ENCODE measurements at regions of chr2 and their contacts with region 1.

Region 1: DNA sequence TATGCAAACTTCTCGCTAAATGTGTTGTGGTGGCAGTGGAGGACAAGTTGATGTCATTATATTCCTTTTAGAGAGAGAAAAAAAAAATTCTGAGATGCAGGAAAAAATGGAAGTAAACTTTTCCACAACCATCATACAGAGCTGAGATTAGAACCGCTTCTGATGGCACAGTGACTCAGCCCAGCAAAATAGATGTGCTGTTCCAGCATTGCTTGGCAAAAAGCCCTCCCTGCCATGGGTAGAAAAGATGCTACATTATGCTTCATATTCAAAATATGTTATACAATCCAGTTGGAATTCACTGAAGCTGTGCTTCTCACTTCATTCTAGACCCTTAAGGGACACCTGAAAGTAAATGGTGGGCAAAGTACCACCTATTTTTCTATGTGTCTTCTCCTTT is 1047.6 kb upstream of the FANCL start:
- DNase-seq: no peak
- H3K4me3 ChIP-seq: no peak overlapping the region
- H3K27ac ChIP-seq: no peak overlapping the region
- H3K4me1 ChIP-seq: no peaks in the 10 kb centered on the region
- H3K27me3 ChIP-seq: peaks cover 0 to 1% (median 0%) of the 10 kb centered on the region in 4 experiments; a peak in 1 of 7 replicates
- CTCF ChIP-seq: no peak
- EP300 ChIP-seq: no peak
- POLR2A ChIP-seq: no peak
- RAD21 ChIP-seq: no peak

Region 2: DNA sequence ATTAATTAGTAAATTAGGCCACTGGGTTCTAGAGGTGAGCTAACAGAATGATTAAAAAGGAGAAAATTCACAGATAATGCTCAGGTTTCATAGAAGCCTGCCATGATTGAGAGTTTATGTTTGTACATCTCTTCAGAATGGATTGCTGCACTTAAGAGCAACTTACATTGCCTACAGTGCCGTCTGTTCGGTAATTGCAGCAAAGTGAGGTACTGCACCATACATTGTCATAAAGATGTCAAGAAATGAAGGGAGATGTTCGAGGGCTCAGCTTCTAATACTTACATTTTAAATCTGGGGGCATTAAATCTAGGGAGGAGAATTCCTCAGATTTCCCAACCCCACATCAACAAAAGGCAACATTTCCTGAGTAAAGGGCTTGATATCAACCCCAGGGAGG is 71.4 kb before region 1 on chr2:
- CTCF ChIA-PET with region 1: no interaction called
- POLR2A ChIA-PET with region 1: no interaction called
- DNase-seq: no peak
- H3K4me3 ChIP-seq: no peak overlapping the region
- H3K27ac ChIP-seq: no peak overlapping the region
- H3K4me1 ChIP-seq: no peaks in the 10 kb centered on the region
- H3K27me3 ChIP-seq: no peaks in the 10 kb centered on the region
- CTCF ChIP-seq: no peak
- EP300 ChIP-seq: no peak
- POLR2A ChIP-seq: no peak
- RAD21 ChIP-seq: no peak

Region 3: DNA sequence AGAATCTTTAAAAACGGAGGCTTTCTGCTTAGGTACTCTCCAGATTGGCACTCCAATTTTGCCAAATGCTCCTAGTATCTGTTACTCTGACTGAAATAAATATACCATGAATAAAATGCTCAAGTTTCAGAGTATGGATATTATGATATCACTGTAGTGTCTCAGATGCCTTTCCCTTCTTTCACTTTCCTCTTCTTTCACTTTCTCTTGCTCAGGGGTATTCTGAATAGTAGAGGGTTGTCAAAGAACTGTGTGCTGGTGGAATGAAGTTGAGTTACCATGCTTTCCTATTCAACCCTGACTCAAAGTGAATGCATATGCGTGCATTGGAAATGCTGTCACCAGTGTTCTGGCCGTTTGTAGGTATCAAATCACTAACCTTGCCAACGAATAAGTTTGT is 32.5 kb before region 1 on chr2:
- CTCF ChIA-PET with region 1: no interaction called
- POLR2A ChIA-PET with region 1: no interaction called
- DNase-seq: no peak
- H3K4me3 ChIP-seq: no peak overlapping the region
- H3K27ac ChIP-seq: no peak overlapping the region
- H3K4me1 ChIP-seq: peaks cover 0 to 4% (median 0%) of the 10 kb centered on the region in 4 experiments; a peak in 1 of 7 replicates
- H3K27me3 ChIP-seq: no peaks in the 10 kb centered on the region
- CTCF ChIP-seq: no peak
- EP300 ChIP-seq: no peak
- POLR2A ChIP-seq: no peak
- RAD21 ChIP-seq: no peak

Region 4: GRCh38 chr2:59276033-59276432 is 12.7 kb before region 1 on chr2:
- CTCF ChIA-PET with region 1: interaction called, 10 read pairs
- POLR2A ChIA-PET with region 1: no interaction called
- DNase-seq: peak in 1 of 2 experiments; percentile 65
- H3K4me3 ChIP-seq: no peak overlapping the region
- H3K27ac ChIP-seq: no peak overlapping the region
- H3K4me1 ChIP-seq: no peaks in the 10 kb centered on the region
- H3K27me3 ChIP-seq: no peaks in the 10 kb centered on the region
- CTCF ChIP-seq: peak; percentile 57 to 72 (median 61)
- EP300 ChIP-seq: no peak
- POLR2A ChIP-seq: no peak
- RAD21 ChIP-seq: peak; percentile 47 to 61

Region 5: GRCh38 chr2:59312029-59312428 is 23.3 kb after region 1 on chr2:
- CTCF ChIA-PET with region 1: no interaction called
- POLR2A ChIA-PET with region 1: no interaction called
- DNase-seq: no peak
- H3K4me3 ChIP-seq: no peak overlapping the region
- H3K27ac ChIP-seq: no peak overlapping the region
- H3K4me1 ChIP-seq: peaks cover 0 to 4% (median 0%) of the 10 kb centered on the region in 4 experiments; a peak in 1 of 7 replicates
- H3K27me3 ChIP-seq: no peaks in the 10 kb centered on the region; a peak in 1 of 7 replicates
- CTCF ChIP-seq: no peak
- EP300 ChIP-seq: no peak
- POLR2A ChIP-seq: no peak
- RAD21 ChIP-seq: no peak

Region 6: DNA sequence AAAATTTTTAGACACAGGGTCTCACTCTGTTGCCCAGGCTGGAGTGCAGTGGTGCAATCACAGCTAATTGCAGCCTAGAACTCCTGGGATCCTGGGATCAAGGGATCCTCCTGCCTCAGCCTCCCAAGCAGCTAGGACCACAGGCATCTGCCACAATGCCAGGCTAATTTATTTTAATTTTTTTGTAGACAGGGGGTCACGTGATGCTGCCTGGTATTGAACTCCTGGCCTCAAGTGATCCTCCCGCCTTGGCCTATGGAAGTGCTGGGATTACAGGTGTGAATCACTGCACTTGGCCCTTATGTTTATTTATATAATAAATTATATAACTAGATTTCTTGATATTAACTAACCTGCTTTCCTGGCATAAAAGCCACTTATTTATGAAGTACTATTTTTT is 34.1 kb after region 1 on chr2:
- CTCF ChIA-PET with region 1: no interaction called
- POLR2A ChIA-PET with region 1: no interaction called
- DNase-seq: no peak
- H3K4me3 ChIP-seq: no peak overlapping the region
- H3K27ac ChIP-seq: no peak overlapping the region
- H3K4me1 ChIP-seq: no peaks in the 10 kb centered on the region
- H3K27me3 ChIP-seq: no peaks in the 10 kb centered on the region
- CTCF ChIP-seq: no peak
- EP300 ChIP-seq: no peak
- POLR2A ChIP-seq: no peak
- RAD21 ChIP-seq: no peak